ENCODE measurements at regions of chr1 and their contacts with region 1.

Region 1: GRCh38 chr1:22641906-22642636 is 1.4 kb upstream of the C1QC start:
- DNase-seq: peak; percentile 61
- H3K4me3 Mint-ChIP-seq: no peak overlapping the region
- H3K27ac Mint-ChIP-seq: no peak overlapping the region
- H3K4me1 Mint-ChIP-seq: no peaks in the 10 kb centered on the region
- H3K27me3 Mint-ChIP-seq: peaks cover 7% of the 10 kb centered on the region
- CTCF ChIP-seq: peak; percentile 84

Region 2: GRCh38 chr1:22131875-22132486 is 510.1 kb before region 1 on chr1:
- CTCF ChIA-PET with region 1: interaction called, 3 read pairs
- POLR2A ChIA-PET with region 1: no interaction called
- intact Hi-C with region 1: loop called (anchors 10 kb)
- DNase-seq: peak; percentile 61
- H3K4me3 Mint-ChIP-seq: no peak overlapping the region
- H3K27ac Mint-ChIP-seq: no peak overlapping the region
- H3K4me1 Mint-ChIP-seq: peaks cover 3% of the 10 kb centered on the region
- H3K27me3 Mint-ChIP-seq: no peaks in the 10 kb centered on the region
- CTCF ChIP-seq: peak; percentile 95

Region 3: GRCh38 chr1:22527555-22528296 is 114.3 kb before region 1 on chr1:
- CTCF ChIA-PET with region 1: interaction called, 4 read pairs
- POLR2A ChIA-PET with region 1: no interaction called
- intact Hi-C with region 1: loop called (anchors 5 kb)
- DNase-seq: no peak
- H3K4me3 Mint-ChIP-seq: no peak overlapping the region
- H3K27ac Mint-ChIP-seq: no peak overlapping the region
- H3K4me1 Mint-ChIP-seq: no peaks in the 10 kb centered on the region
- H3K27me3 Mint-ChIP-seq: no peaks in the 10 kb centered on the region
- CTCF ChIP-seq: no peak

Region 4: GRCh38 chr1:22575532-22576149 is 66.4 kb before region 1 on chr1:
- CTCF ChIA-PET with region 1: no interaction called
- POLR2A ChIA-PET with region 1: no interaction called
- intact Hi-C with region 1: no loop called
- DNase-seq: no peak
- H3K4me3 Mint-ChIP-seq: no peak overlapping the region
- H3K27ac Mint-ChIP-seq: no peak overlapping the region
- H3K4me1 Mint-ChIP-seq: no peaks in the 10 kb centered on the region
- H3K27me3 Mint-ChIP-seq: peaks cover 35% of the 10 kb centered on the region
- CTCF ChIP-seq: no peak

Measured in MCF 10A (cell line).